ENCODE measurements at regions of chr15 and their contacts with region 1.

Region 1: DNA sequence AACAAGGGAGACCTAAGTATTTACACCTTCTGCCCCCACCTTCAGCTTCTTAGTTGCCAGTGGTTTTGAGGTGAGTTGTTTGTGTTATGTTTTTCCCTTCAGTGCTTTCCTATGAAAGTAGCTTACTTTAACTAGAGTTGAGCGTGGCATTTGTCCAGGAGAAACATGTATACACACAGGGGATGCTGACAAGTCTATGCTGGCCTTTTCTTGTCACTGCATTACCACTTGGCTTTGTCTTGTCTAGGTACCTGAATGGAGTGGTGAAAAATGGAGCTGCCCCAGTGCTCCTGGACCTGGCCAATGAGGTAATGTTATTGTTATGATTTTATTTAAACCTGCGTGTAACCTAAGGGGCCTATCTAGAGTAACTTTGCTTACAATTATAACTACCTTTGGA is 74.4 kb downstream of the CDIN1 start:
- DNase-seq: no peak
- H3K4me3 ChIP-seq: no peak overlapping the region
- H3K27ac ChIP-seq: no peak overlapping the region
- H3K4me1 ChIP-seq: no peaks in the 10 kb centered on the region
- H3K27me3 ChIP-seq: no peaks in the 10 kb centered on the region
- CTCF ChIP-seq: no peak

Region 2: GRCh38 chr15:36579792-36580431 is 73.9 kb before region 1 on chr15:
- CTCF ChIA-PET with region 1: no interaction called
- POLR2A ChIA-PET with region 1: no interaction called
- intact Hi-C with region 1: no loop called
- DNase-seq: no peak
- H3K4me3 ChIP-seq: peak overlapping the region; percentile 77
- H3K27ac ChIP-seq: peak overlapping the region; percentile 88
- H3K4me1 ChIP-seq: peaks cover 32% of the 10 kb centered on the region
- H3K27me3 ChIP-seq: no peaks in the 10 kb centered on the region
- CTCF ChIP-seq: no peak

Region 3: DNA sequence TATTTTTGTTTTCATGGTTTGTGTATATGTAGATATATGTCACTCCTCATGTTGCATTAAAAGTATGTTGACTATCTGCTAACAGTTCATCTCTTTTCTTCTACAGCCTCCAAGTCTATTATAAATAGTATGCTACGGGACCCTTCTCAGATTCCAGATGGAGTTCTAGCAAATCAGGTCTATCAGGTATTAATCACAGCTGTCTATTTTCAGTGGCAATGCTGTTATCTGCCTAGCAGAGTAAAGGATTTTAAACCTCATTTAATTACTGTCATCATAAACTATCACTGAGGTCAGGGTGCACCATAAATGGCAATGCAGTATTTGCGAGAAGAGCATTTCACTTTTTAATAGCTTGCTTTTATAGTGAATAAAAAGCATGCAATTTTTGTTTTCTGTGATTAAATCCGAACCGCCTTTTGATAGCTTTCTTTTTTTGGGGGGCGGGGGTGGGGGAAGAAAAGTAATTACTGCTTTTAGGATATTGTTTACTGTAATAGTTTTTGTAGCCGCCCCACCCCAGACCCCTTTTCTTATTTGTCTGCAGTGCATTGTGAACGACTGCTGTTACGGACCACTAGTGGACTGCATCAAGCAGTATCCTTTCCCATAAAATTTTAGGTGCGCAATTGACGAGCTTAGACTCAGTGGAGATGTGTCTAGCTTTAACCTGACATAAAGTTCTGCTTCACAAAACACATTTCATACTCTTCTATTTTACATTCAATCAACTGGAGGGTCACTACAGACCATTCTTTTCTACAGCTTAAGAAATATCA is 37.9 kb after region 1 on chr15:
- CTCF ChIA-PET with region 1: interaction called, 12 read pairs
- POLR2A ChIA-PET with region 1: no interaction called
- intact Hi-C with region 1: no loop called
- DNase-seq: no peak
- H3K4me3 ChIP-seq: no peak overlapping the region
- H3K27ac ChIP-seq: no peak overlapping the region
- H3K4me1 ChIP-seq: no peaks in the 10 kb centered on the region
- H3K27me3 ChIP-seq: no peaks in the 10 kb centered on the region
- CTCF ChIP-seq: no peak

Measured in PC-9 (cell line).